Sigmoid colon (tissue), 7 donors: ENCODE measurements at regions of chr6 and their contacts with region 1.

Region 1: DNA sequence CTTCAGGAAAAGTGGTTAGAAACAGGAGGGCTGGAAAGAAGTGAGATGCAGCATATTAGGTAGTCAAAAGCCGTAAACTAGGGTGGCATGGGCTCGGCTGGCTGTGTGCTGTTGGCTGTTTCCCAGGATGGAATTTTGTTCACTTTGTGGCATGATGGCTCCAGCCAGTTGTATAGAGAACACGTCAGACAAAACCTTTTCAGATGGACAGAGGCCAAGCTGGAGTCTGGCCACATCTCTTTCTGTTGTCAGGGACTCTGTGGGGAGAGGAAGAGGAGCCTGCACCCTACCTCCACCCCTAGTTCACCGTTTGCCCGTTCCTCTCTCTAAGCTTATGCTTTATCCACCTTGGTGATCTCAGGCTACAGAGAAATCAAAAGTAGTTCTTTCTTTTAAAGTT is 22.0 kb downstream of the C6orf89 start:
- DNase-seq: peak; percentile 91
- H3K4me3 ChIP-seq: no peak overlapping the region
- H3K27ac ChIP-seq: peak overlapping the region; percentile 62 to 72 (median 66)
- H3K4me1 ChIP-seq: peaks cover 0 to 42% (median 33%) of the 10 kb centered on the region in 4 donors
- H3K27me3 ChIP-seq: no peaks in the 10 kb centered on the region
- CTCF ChIP-seq: no peak
- EP300 ChIP-seq: no peak
- POLR2A ChIP-seq: no peak

Region 2: GRCh38 chr6:36985808-36986703 is 78.3 kb after region 1 on chr6 and contains the start of gene MTCH1:
- intact Hi-C with region 1: loop called (anchors 5 kb)
- DNase-seq: peak; percentile 97
- H3K4me3 ChIP-seq: peak within 1 kb of the TSS; percentile 76 to 100 (median 94)
- H3K27ac ChIP-seq: peak within 1 kb of the TSS; percentile 95 to 99 (median 98)
- H3K4me1 ChIP-seq: peaks cover 0 to 55% (median 50%) of the 10 kb centered on the region in 4 donors
- H3K27me3 ChIP-seq: no peaks in the 10 kb centered on the region
- CTCF ChIP-seq: no peak
- EP300 ChIP-seq: no peak
- POLR2A ChIP-seq: peak; percentile 76 to 78
- total RNA-seq, gene MTCH1: 163 to 198 (median 195) TPM